OCI-LY7 (cell line): ENCODE measurements at regions of chr1 and their contacts with region 1.

Region 1: GRCh38 chr1:1919304-1920056 is 401 bp upstream of the TMEM52 start:
- DNase-seq: peak; percentile 100
- H3K4me3 ChIP-seq: peak overlapping the region; percentile 70
- H3K27ac ChIP-seq: no peak overlapping the region
- H3K4me1 ChIP-seq: peaks cover 12% of the 10 kb centered on the region
- CTCF ChIP-seq: no peak

Region 2: DNA sequence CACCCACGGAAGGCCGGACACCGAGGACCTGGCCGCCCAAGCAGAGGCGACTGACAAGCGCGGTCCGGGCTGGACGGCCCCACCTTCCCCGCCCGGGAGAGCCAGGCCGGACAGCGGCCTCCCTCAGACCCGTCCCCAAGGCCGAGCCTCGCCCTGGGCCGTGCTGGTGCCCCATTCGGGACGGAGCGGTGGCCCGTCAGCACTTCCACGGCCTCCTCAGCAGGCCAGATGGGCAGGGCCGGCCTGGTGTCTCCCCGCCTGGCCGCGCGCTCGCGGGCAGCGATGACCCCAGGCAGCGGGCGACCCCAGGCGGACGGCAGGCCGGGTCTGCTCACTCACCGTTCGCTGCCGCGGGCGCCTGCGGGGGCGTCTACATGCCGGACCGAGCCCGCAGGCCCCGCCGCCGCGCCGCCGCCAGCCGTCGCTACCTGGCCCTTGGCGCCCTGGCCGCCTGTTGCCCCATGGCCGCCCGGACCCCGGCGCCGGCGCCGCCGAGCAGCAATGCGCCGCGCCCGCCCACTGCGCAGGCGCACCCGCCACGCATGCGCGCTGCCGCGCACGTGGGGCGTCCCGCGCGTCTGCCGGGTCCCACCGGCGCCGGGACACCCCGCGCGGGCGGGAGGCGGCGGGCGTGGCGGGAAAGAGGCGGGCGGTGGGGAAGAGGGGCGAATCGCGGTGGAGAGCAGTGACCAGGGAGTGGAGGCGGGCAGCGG is 141.4 kb before region 1 on chr1 and contains the start of gene NADK:
- CTCF ChIA-PET with region 1: no interaction called
- POLR2A ChIA-PET with region 1: no interaction called
- intact Hi-C with region 1: no loop called
- DNase-seq: peak; percentile 84
- H3K4me3 ChIP-seq: peak within 1 kb of the TSS; percentile 97
- H3K27ac ChIP-seq: peak within 1 kb of the TSS; percentile 96
- H3K4me1 ChIP-seq: peaks cover 71% of the 10 kb centered on the region
- CTCF ChIP-seq: no peak
- total RNA-seq, gene NADK: 144 and 156 TPM in 2 replicates

Region 3: DNA sequence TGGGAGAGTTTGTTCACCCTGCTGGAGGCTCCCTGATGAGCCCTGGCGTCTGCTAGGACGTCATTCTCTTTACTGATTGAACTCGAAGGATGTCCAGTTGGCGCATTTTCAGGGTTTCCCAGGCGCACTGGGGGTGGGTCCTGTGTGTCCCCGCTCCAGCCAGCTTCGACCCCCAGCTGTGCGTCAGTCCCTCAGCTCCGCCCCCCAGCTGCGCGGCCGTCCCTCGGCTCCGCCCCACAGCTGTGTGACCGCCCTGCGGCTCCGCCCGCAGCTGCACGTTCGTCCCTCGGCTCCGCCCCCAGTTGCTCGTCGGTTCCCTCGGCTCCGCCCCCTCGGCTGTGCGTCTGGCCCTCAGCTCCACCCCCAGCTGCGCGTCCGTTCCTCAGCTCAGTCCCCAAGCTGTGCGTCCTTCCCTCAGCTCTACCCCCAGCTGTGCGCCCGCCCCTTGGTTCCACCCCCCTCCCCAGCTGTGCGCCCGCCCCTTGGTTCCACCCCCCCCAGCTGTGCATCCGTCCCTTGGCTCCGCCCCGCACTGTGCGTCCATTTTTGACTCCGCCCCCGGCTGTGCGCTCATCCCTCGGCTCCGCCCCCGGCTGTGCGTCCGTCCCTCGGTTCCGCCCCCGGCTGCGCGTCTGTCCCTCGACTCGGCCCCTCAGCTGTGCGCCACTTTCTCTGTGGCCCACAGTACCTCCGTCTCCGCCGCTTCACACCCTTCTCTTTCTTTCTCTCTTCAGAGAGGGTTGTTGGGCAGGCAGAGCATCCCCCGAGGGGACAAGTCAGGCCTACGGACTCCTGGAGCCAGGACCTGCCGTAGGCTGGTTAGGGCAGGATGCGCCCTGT is 213.8 kb after region 1 on chr1:
- CTCF ChIA-PET with region 1: no interaction called
- POLR2A ChIA-PET with region 1: no interaction called
- intact Hi-C with region 1: loop called (anchors 2 kb)
- DNase-seq: peak; percentile 98
- H3K4me3 ChIP-seq: peak overlapping the region; percentile 63
- H3K27ac ChIP-seq: no peak overlapping the region
- H3K4me1 ChIP-seq: peaks cover 7% of the 10 kb centered on the region
- CTCF ChIP-seq: no peak